ENCODE measurements at regions of chr5 and their contacts with region 1.

Region 1: GRCh38 chr5:55407059-55407684 is 99.4 kb downstream of the MTREX start:
- DNase-seq: peak; percentile 54
- H3K4me3 Mint-ChIP-seq: no peak overlapping the region
- H3K27ac Mint-ChIP-seq: peak overlapping the region; percentile 53
- H3K4me1 Mint-ChIP-seq: no peaks in the 10 kb centered on the region
- H3K27me3 Mint-ChIP-seq: no peaks in the 10 kb centered on the region
- CTCF ChIP-seq: peak; percentile 59

Region 2: DNA sequence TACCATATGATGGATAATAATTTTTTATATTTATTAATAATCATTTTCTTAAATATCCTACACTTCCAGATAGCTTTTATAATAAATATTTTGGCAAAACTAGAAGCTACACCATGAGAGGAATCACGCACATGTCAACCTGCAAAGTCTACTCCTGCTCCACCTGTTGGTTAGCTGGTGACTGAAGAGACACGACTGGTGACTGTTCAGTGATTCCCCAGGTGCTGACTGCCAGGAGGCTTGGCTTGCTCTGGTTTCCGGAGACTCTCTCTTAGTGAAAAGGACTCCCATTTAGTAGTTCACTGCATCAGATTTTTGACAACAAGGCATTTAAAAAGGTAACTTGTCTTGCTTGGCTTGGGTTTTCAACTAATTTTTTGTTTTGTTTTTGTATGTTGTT is 283.8 kb before region 1 on chr5:
- CTCF ChIA-PET with region 1: no interaction called
- POLR2A ChIA-PET with region 1: no interaction called
- intact Hi-C with region 1: no loop called
- DNase-seq: no peak
- H3K4me3 Mint-ChIP-seq: no peak overlapping the region
- H3K27ac Mint-ChIP-seq: no peak overlapping the region
- H3K4me1 Mint-ChIP-seq: no peaks in the 10 kb centered on the region
- H3K27me3 Mint-ChIP-seq: peaks cover 74% of the 10 kb centered on the region
- CTCF ChIP-seq: no peak

Region 3: DNA sequence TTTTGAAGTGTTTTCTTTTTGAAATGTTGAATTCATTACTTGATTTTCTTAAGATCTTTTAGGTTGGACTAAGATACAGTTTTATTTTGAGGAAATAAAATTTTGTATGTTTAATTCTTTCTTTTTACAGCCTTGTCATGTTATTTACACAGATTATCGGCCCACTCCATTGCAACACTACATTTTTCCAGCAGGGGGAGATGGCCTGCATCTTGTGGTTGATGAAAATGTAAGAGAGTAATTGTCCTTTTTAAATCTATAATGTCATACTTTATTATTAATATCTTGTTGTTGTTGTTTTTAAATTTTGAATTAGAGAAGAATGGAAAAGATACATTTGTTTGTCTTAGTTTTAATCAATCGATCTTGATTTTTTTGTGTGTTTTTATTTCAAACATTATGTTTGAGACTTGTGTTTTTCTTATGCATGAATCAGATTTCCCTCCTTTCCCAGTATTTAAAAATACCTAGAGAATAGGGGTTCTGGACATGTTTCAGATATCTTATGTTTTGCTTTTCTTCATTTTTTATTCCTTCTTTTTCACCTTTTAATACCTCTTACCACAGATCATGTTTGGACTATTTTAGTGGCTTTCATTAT is 62.7 kb before region 1 on chr5:
- CTCF ChIA-PET with region 1: interaction called, 3 read pairs
- POLR2A ChIA-PET with region 1: no interaction called
- intact Hi-C with region 1: loop called (anchors 2 kb)
- DNase-seq: peak; percentile 70
- H3K4me3 Mint-ChIP-seq: no peak overlapping the region
- H3K27ac Mint-ChIP-seq: peak overlapping the region; percentile 66
- H3K4me1 Mint-ChIP-seq: no peaks in the 10 kb centered on the region
- H3K27me3 Mint-ChIP-seq: no peaks in the 10 kb centered on the region
- CTCF ChIP-seq: peak; percentile 52

Region 4: DNA sequence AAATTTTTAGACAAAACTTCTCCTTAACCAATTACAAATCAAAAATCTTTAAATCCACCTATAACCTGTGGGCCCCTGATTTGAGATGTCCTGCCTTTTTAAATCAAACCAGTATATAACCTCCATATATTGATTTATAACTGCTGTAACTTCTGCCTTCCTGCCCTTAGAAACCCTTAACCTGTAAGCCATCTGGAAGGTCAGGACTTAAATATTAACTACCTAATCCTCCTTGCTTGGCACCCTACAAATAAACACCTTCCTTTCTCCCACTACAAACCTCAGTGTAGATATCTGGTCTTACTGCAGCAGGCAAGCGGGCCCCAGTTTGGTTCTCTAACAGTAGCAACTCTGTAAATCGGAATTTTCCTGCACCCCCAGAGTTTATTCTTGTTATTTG is 15.5 kb before region 1 on chr5:
- CTCF ChIA-PET with region 1: interaction called, 10 read pairs
- POLR2A ChIA-PET with region 1: interaction called, 5 read pairs
- intact Hi-C with region 1: no loop called
- DNase-seq: no peak
- H3K4me3 Mint-ChIP-seq: no peak overlapping the region
- H3K27ac Mint-ChIP-seq: no peak overlapping the region
- H3K4me1 Mint-ChIP-seq: no peaks in the 10 kb centered on the region
- H3K27me3 Mint-ChIP-seq: no peaks in the 10 kb centered on the region
- CTCF ChIP-seq: no peak

Measured in MCF 10A (cell line).